PC-9 (cell line): ENCODE measurements at regions of chr10 and their contacts with region 1.

Region 1: DNA sequence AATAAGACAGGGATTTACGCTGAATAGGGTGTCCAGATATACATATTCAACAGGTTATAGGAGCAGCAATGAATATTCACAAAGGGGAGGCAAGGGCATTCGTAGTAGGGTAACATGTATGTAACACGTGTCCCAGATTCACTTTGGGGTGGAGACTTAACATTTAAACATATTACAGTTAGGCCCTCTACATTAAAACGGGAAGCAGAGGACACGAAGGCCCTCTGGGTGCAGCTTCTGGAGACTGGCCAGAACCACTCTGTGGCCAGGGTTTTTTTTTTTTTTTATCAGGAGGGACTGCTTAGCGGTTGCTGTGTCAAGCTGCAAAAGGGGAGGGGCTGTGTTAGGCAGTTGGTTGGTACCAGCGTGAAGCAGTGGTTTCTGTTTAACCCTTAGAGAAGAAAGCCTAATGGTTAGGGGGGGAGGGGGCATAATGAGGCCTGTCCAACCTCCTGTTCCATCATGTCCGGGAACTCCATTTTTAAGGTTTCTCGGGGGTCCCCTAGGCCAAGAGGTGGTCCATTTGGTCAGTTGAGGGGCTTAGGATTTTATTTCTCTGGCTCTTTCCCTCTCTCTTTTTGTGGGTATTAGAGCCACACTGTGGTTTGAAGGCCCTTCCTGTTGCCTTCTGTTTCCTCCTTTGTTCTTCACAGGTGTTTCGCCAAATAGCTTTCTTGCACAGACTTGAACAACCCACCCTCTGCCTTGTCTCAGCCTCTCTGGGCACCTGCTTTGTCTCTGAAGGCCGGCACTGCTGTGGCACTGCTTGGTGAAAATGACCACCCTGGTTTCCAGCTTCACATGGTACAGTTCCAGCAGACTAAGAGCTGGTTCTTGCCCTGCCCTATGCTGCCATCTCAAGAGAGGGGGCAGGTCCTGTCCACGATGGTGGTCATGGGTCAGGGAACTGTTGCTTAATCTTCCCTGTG is 26.4 kb downstream of the PRF1 start:
- DNase-seq: peak; percentile 69 to 72
- H3K4me3 ChIP-seq: no peak overlapping the region
- H3K27ac ChIP-seq: no peak overlapping the region
- H3K4me1 ChIP-seq: peaks cover 35% of the 10 kb centered on the region
- H3K27me3 ChIP-seq: no peaks in the 10 kb centered on the region
- CTCF ChIP-seq: no peak

Region 2: GRCh38 chr10:70672165-70673042 is 96.3 kb after region 1 on chr10 and contains the start of gene ADAMTS14:
- CTCF ChIA-PET with region 1: no interaction called
- POLR2A ChIA-PET with region 1: no interaction called
- intact Hi-C with region 1: loop called (anchors 1 kb)
- DNase-seq: peak; percentile 34 to 56
- H3K4me3 ChIP-seq: peak within 1 kb of the TSS; percentile 54
- H3K27ac ChIP-seq: no peak within 1 kb of the TSS
- H3K4me1 ChIP-seq: peaks cover 26% of the 10 kb centered on the region
- H3K27me3 ChIP-seq: peaks cover 11% of the 10 kb centered on the region; the same call in 1 of the 2 replicates
- CTCF ChIP-seq: no peak
- total RNA-seq, gene ADAMTS14: 1.9 and 2.7 TPM in 2 replicates

Region 3: DNA sequence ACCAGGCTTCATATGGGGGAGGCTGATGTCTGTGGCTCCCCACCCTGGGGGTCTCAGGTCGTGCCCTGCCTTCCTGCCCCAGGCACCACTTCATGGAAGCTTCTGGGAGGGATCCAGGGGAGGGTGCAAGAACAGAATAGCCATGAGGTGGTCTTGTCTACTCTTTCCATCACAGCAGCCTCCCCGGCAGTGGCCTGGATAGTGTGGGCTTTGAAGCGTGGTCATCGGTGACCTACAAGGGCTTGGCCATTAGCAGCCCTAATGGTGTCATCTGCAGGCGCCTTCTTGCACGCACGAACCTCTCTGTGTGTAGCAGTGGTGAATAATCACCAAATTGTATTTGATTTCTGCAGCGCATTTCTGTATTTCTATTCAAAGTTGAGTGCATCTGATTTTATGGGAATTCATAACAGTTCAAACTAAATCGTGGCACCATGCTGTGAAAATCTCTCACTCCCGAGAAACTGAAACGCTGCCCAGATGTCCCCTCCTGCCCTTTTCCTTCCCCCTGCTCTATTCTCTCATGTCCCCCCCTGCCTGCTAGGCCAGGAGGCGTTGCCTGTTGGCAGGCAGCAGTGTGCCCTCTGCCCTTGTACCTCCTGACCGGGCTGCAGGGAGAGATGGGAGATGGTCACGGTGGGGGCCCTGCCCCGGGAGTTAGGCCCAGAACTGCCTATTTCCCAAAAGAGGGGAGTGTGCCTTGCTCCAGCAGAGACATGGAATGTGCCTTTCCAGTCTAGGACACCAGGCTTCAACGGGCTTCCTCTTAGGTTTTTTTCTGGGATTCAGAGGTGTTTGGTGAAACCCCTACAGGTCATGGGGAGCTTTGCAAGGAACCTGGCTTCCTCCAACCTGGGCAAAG is 855.3 kb after region 1 on chr10:
- CTCF ChIA-PET with region 1: no interaction called
- POLR2A ChIA-PET with region 1: no interaction called
- intact Hi-C with region 1: loop called (anchors 5 kb)
- DNase-seq: no peak
- H3K4me3 ChIP-seq: no peak overlapping the region
- H3K27ac ChIP-seq: no peak overlapping the region
- H3K4me1 ChIP-seq: peaks cover 23% of the 10 kb centered on the region
- H3K27me3 ChIP-seq: no peaks in the 10 kb centered on the region
- CTCF ChIP-seq: peak; percentile 48